GM18951 (cell line): ENCODE measurements at regions of chr19 and their contacts with region 1.

Region 1: DNA sequence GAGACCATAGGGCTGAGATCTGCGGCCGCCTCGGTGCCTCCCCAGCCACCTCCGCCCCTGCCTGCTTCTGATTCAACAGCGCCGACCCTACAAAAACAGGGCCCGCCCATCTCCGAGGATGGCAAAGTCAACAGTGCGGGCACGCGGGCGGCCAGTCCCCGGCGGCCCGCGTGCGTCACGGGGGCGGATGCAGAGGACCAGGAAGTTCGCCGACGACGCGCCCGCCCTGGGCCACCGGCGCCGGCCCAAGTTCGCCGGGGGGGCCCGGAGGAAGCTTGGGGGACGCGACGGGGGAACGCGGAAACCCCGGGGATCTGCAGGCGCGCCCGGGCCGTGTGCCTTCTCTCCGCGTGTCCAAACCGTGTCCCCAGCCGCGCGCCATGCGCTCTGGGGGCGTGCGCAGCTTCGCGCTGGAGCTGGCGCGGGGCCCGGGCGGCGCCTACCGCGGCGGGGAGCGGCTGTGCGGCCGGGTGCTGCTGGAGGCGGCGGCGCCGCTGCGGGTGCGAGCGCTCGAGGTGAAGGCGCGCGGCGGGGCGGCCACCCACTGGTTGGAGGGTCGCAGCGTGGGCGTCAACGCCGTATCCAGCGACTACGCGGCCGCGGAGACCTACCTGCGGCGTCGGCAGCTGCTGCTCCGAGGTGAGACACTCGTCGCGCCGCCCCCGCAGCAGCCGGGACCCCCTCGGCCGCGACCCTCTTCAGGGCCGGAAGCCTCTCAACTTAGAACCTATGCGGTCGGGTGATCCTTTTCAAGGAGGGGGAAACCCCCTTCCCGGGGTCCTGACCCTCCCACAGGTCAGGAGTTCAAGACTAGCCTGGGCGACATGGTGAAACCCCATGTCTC is 6.8 kb upstream of the ARRDC2 start:
- POLR2A ChIP-seq: peak; percentile 74

Region 2: GRCh38 chr19:17747205-17748098 is 253.7 kb before region 1 on chr19:
- in situ Hi-C with region 1: no loop called
- POLR2A ChIP-seq: peak; percentile 54

Region 3: GRCh38 chr19:17938092-17938845 is 62.9 kb before region 1 on chr19:
- in situ Hi-C with region 1: loop called (anchors 5 kb)
- POLR2A ChIP-seq: no peak